Activated B cell treated with CpG ODN at 0.5 μM for 24 hours (primary cell): ENCODE measurements at regions of chr10 and their contacts with region 1.

Region 1: GRCh38 chr10:72048450-72049124 is 39.8 kb downstream of the SPOCK2 start:
- DNase-seq: peak; percentile 74
- ATAC-seq: peak; percentile 99
- H3K4me3 Mint-ChIP-seq: no peak overlapping the region
- H3K27ac Mint-ChIP-seq: peak overlapping the region; percentile 41
- H3K4me1 Mint-ChIP-seq: peaks cover 19% of the 10 kb centered on the region
- H3K27me3 Mint-ChIP-seq: no peaks in the 10 kb centered on the region
- CTCF ChIP-seq: peak; percentile 40

Region 2: DNA sequence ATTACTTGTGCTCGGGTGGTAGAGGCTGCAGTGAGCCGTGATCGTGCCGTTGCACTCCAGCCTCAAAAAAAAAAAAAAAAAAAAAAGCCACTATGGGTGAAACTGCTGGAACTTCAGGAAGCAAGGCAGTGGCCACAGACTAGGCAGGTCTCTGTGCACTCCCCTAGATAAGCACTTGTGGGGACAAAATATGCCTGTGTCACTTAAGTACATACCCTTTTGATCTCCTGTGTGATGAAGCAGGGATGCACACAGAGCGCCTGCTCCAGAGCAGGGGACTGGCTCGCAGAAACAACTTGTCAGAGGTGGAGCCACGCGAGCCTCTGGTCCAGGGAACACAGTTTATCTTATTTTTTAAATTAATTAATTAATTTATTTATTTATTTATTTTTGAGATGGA is 154.7 kb before region 1 on chr10:
- CTCF ChIA-PET with region 1: interaction called, 32 read pairs
- POLR2A ChIA-PET with region 1: interaction called, 3 read pairs
- intact Hi-C with region 1: loop called (anchors 1 kb)
- DNase-seq: no peak
- ATAC-seq: no peak
- H3K4me3 Mint-ChIP-seq: no peak overlapping the region
- H3K27ac Mint-ChIP-seq: no peak overlapping the region
- H3K4me1 Mint-ChIP-seq: peaks cover 20% of the 10 kb centered on the region
- H3K27me3 Mint-ChIP-seq: peaks cover 2% of the 10 kb centered on the region
- CTCF ChIP-seq: no peak

Region 3: DNA sequence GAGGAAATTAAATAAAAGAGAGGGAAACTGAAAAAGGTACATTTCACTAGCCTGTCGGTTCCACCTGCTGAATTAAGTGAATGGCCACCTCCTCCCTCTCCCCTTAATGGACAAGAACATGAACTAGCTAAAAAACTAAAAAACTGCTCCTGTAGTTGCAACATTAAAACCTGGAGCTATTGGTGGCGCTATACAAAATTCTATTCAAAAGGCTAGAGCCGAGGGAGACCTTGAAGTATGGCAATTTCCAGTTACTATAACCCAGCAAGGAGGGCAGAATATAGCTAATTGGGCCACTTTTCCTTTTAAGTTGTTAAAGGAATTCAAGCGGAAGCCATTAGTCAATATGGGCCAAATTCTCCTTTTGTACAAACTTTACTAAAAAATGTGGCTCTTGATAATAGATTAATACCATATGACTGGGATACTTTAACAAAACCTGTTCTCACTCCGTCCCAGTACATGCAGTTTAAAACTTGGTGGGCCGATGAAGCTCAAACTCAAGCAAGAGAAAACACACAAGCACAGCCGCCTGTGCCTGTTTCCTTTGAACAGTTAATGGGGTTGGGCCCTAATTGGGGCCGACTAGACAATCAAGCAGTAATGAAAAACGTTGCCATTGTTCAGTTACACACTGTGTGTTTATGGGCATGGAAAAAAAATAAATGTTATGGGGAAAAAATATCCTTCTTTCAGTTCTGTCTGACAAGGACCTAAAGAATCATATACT is 90.9 kb before region 1 on chr10:
- CTCF ChIA-PET with region 1: interaction called, 3 read pairs
- POLR2A ChIA-PET with region 1: no interaction called
- intact Hi-C with region 1: loop called (anchors 5 kb)
- DNase-seq: no peak
- ATAC-seq: no peak
- H3K4me3 Mint-ChIP-seq: no peak overlapping the region
- H3K27ac Mint-ChIP-seq: no peak overlapping the region
- H3K4me1 Mint-ChIP-seq: peaks cover 4% of the 10 kb centered on the region
- H3K27me3 Mint-ChIP-seq: peaks cover 26% of the 10 kb centered on the region
- CTCF ChIP-seq: no peak

Region 4: DNA sequence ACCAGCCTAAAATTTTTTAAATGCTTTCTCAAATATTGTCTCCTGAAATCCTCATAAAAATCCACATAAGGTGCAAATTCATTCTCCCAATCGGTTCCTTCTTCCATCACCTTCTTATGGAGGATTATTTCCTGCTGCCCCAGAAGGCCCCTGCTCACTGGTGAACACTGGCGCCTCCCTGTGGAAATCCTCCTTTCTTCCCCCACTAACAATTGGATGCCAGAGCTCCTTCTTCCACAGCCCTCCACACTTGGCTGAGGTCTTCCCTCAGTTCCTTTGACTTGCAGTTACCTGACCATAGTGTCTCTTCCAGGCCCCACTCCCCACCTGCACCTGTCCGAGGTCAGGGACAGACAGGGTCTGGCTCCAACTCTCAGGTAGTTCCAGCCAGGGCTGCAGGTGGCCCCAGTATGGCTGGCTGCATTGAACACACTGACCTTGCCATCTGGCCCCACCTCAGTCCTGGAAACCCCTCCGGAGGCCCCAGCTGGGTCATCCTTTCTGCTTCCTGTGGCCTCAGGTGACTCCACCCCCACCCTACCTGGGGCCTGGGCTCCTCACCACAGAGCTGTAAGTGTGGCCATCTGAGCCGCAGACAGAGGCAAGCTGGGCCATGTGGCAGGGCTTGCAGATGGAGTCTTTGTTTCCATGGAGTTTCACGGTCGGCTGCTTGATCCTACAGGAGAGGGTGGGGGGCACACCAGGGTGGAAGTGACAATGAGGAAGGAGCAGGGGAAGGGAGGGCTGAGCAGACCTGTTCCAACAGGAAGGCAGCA is 21.4 kb after region 1 on chr10:
- CTCF ChIA-PET with region 1: interaction called, 12 read pairs
- POLR2A ChIA-PET with region 1: interaction called, 7 read pairs
- intact Hi-C with region 1: no loop called
- DNase-seq: no peak
- ATAC-seq: no peak
- H3K4me3 Mint-ChIP-seq: no peak overlapping the region
- H3K27ac Mint-ChIP-seq: peak overlapping the region; percentile 50
- H3K4me1 Mint-ChIP-seq: peaks cover 6% of the 10 kb centered on the region
- H3K27me3 Mint-ChIP-seq: no peaks in the 10 kb centered on the region
- CTCF ChIP-seq: no peak

Region 5: DNA sequence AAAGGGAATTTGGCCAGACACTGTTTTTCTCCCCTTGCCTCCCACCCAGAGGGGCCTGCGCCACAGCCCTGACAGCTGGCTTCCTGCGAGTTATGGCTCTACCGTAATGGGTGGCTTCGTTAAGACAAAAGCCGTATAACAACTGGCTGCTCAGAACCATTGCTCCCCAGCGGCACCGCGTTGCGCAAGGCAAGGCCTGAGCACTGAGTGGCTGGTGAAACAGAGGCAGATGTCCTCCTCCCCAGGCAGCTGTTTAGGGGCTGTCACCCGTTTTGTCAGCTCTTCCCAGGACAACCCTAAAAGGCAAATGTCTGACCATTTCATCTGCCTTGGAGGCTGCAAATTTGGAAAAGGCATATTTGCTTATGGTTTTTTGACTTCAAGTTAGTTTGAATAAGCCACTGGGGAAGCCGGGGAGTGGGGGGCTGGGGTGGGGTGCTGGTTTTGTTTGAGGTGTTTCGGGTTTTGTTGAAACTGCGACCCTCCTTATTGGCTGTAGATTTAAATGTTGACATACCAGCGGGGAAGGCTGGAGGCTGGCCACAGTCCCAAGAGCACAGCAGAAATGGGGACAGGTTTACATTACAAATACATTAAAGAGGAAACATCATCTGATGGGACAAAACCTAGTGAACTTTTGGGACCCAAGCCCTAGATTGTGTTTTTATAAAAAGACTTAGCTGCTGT is 40.4 kb after region 1 on chr10:
- CTCF ChIA-PET with region 1: interaction called, 13 read pairs
- POLR2A ChIA-PET with region 1: interaction called, 9 read pairs
- intact Hi-C with region 1: loop called (anchors 1 kb)
- DNase-seq: peak; percentile 29
- ATAC-seq: peak; percentile 27
- H3K4me3 Mint-ChIP-seq: peak overlapping the region; percentile 99
- H3K27ac Mint-ChIP-seq: peak overlapping the region; percentile 97
- H3K4me1 Mint-ChIP-seq: peaks cover 39% of the 10 kb centered on the region
- H3K27me3 Mint-ChIP-seq: no peaks in the 10 kb centered on the region
- CTCF ChIP-seq: no peak

Region 6: DNA sequence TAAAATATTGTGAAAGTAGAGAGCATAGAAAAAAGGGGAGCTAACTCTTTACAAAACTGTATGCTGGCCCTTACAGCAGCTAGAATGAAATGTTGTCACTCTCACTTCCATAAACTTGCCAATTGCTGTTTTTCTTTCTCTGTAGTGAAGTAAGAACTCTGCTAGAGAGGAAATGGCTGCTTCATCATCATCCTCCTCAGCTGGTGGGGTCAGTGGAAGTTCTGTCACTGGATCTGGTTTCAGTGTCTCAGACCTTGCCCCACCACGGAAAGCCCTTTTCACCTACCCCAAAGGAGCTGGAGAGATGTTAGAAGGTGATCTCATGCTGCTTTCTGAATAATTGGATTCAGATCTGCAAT is 175.1 kb after region 1 on chr10:
- CTCF ChIA-PET with region 1: interaction called, 16 read pairs
- POLR2A ChIA-PET with region 1: interaction called, 3 read pairs
- intact Hi-C with region 1: loop called (anchors 1 kb)
- DNase-seq: no peak
- ATAC-seq: peak; percentile 47
- H3K4me3 Mint-ChIP-seq: peak overlapping the region; percentile 59
- H3K27ac Mint-ChIP-seq: peak overlapping the region; percentile 84
- H3K4me1 Mint-ChIP-seq: peaks cover 67% of the 10 kb centered on the region
- H3K27me3 Mint-ChIP-seq: no peaks in the 10 kb centered on the region
- CTCF ChIP-seq: no peak

Region 7: DNA sequence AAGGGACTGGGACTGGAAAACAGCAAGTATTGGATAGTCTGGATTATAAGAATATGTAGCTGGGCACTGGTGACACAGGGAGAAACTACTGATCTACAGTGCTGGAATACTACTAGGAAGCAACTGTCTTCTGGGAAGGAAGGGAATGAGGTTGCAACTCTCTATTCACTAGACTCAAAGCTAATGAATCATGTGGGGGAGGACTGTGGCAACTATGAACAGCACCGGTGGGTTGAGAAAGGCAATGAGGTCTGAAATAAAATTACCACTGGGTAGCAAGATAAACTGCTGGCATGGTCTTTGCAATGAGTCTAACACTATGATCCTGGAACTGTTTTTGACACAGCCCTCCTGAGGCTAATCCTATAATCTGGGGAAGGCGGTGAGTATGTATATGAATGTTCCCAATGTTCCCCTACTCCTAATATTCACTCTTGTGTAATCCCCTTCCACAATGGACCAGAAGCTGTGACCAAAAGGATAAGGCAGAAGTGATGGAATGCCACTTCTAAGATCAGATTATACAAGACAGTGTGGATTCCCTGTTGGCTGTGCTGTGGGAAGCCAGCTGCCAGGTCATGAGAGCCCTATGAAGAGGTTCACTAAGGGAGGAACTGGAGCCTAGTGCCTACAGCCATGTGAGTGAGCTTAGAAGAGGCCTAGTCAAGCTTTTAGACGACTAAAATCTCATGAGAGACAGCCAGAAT is 407.5 kb after region 1 on chr10:
- CTCF ChIA-PET with region 1: no interaction called
- POLR2A ChIA-PET with region 1: no interaction called
- intact Hi-C with region 1: no loop called
- DNase-seq: no peak
- ATAC-seq: no peak
- H3K4me3 Mint-ChIP-seq: no peak overlapping the region
- H3K27ac Mint-ChIP-seq: no peak overlapping the region
- H3K4me1 Mint-ChIP-seq: peaks cover 12% of the 10 kb centered on the region
- H3K27me3 Mint-ChIP-seq: no peaks in the 10 kb centered on the region
- CTCF ChIP-seq: no peak